Activated T-helper 1 cell treated with anti-CD3 and anti-CD28 coated beads, Interleukin-12 subunit alpha, Interleukin-12 subunit beta, Interleukin-2, Interleukin-4 antibody, amounts not matched to agents 30 ng/mL and 10 ng/mL and 1 ng/mL, durations not matched to agents 14 hours and 24 hours and 36 hours (primary cell): ENCODE measurements at regions of chr1 and their contacts with region 1.

Region 1: GRCh38 chr1:27392096-27392777 is at the start of gene GPR3:
- DNase-seq: peak; percentile 91
- H3K4me3 Mint-ChIP-seq: peak within 1 kb of the TSS; percentile 82
- H3K27ac Mint-ChIP-seq: peak within 1 kb of the TSS; percentile 93
- H3K4me1 Mint-ChIP-seq: peaks cover 12% of the 10 kb centered on the region
- H3K27me3 Mint-ChIP-seq: peaks cover 12% of the 10 kb centered on the region
- total RNA-seq, gene GPR3: 3.2 and 4.0 TPM in 2 replicates

Region 2: DNA sequence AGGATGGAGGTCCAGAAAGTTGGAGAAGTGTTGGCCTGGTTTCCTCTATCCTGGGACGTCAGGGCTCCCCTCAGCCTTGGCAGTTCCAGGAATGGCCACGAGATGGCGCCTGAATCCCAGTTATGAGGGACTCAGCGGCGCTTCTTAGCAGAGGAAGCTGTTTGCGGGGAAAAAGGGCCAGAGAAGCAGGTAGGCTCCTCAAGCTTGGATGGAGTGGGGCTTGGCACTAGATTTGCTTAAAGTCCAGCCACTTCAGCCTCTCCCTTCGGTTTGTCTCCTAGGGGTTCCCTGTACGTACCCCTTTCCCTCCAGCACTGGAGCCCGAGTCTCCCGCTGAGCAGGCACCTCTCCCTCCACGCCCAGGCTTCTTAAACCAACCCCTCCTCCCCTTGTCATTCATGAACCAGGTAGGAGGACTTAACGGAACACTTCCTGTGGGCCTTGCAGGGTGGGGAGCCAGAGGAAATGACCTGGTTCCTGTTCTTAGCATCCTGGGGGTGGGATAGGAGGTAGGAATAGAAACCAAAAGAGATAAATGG is 347.6 kb before region 1 on chr1:
- intact Hi-C with region 1: loop called (anchors 2 kb)
- DNase-seq: peak; percentile 81
- H3K4me3 Mint-ChIP-seq: peak overlapping the region; percentile 82
- H3K27ac Mint-ChIP-seq: peak overlapping the region; percentile 86
- H3K4me1 Mint-ChIP-seq: peaks cover 18% of the 10 kb centered on the region
- H3K27me3 Mint-ChIP-seq: peaks cover 3% of the 10 kb centered on the region

Region 3: DNA sequence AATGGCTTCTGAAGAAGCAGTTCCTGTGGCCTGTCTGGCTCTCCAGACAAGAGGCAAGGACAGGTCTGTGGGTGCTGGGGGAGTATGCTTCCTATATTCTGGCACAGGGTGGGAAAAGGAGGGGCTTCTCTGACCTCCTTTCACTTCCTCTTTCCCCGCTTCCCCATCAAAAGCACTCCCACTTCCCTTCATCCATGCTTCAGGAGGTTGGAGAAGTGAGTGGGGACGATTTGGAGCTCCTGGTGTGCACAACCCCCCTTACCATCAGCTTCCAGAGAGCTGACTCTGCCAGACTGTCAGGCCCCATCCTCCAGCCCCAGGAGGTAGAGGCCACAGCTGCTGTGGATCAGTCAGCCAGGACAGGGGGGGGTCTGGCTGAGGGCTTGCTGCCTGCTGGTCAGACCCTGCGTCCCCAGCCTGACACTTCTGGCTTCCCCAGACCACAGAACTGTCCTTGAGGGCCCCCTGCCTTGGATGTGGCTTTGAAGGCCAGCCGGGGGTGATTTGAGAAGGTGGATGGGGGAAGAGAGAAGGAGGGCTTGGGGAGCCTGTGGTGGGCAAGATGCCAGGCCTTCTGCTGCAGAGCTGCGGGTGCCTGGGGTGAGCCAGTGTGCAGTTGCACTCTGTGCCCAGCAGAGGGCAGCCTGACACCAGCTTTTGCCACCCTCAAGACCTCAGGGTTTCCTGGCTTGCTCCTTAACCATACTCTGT is 91.7 kb before region 1 on chr1:
- intact Hi-C with region 1: loop called (anchors 1 kb)
- DNase-seq: peak; percentile 61
- H3K4me3 Mint-ChIP-seq: no peak overlapping the region
- H3K27ac Mint-ChIP-seq: no peak overlapping the region
- H3K4me1 Mint-ChIP-seq: peaks cover 4% of the 10 kb centered on the region
- H3K27me3 Mint-ChIP-seq: no peaks in the 10 kb centered on the region

Region 4: DNA sequence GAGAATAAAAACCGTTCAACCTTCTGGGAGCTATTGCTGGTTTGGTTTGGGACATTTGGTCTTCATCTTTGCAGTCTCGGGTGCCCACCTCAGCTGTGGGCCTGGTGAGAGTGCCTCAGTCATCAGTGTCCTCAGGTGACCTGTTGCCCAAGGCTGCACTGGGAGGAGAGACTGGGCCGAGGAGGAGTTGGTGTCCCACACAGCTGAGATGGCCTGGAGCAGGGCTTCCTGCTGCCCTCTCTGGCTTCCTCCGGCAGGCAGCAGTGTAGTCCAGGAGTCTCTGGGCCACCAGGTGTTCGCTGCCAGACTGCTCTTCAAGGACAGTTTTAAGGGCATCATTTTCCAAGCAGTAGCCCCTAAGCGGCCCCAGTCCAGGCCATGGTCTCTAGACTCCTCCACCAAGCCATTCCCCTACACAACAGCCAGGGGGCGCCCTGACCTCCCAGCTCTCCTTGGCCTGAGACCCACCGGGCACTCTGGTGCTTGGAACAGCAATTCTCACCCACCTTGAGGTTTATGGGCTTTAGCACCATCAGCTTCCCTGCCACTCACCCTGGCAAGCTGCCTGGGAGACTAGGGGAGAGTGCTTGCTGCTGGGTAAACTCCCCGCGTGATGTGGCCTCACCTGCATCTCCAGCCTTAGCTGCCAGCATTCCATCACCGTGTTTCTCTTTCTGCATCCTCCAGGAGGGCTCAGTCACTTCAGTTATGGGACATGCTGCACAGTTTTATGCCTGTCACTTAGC is 59.5 kb before region 1 on chr1:
- intact Hi-C with region 1: loop called (anchors 1 kb)
- DNase-seq: peak; percentile 31
- H3K4me3 Mint-ChIP-seq: no peak overlapping the region
- H3K27ac Mint-ChIP-seq: peak overlapping the region; percentile 34
- H3K4me1 Mint-ChIP-seq: peaks cover 21% of the 10 kb centered on the region
- H3K27me3 Mint-ChIP-seq: no peaks in the 10 kb centered on the region

Region 5: DNA sequence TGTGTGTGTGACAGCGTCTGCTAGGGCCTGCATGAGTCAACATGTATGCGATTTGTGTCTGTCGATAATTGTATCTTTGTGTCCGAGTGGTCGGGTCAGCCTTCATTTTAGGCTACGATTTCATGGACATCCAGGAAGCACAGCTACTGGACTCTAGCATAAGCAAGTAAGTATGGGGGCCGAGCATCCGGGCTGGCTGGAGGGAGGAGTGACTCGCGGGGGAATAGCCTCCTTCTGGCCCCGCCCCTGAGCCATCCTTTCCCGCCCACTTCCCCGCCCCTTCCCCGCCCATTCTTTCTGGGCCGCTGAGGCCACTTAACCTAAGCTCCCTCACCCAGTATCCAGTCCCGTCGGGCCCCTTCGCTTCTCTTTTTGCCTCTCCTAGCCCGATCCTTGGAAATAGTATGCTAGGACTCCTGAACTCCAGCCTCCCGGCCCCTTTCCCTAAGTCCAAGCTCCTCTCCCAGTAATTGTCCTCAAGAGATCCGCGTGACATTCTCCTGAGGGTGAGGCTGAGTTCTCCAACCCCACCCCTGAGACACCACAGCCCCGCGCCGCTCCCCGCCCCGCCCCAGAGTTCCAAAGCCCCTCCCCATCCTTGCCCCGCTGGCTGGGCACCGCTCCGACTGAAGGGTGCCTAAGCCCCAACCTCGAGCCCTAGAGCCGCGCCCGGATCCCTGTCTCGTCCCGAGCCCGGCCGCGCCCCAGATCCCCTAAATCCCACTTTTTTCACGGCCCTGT is 26.7 kb before region 1 on chr1:
- intact Hi-C with region 1: loop called (anchors 1 kb)
- DNase-seq: peak; percentile 60
- H3K4me3 Mint-ChIP-seq: peak overlapping the region; percentile 90
- H3K27ac Mint-ChIP-seq: peak overlapping the region; percentile 86
- H3K4me1 Mint-ChIP-seq: peaks cover 38% of the 10 kb centered on the region
- H3K27me3 Mint-ChIP-seq: no peaks in the 10 kb centered on the region